Psoas muscle (tissue), 8 donors: ENCODE measurements at regions of chr11 and their contacts with region 1.

Region 1: DNA sequence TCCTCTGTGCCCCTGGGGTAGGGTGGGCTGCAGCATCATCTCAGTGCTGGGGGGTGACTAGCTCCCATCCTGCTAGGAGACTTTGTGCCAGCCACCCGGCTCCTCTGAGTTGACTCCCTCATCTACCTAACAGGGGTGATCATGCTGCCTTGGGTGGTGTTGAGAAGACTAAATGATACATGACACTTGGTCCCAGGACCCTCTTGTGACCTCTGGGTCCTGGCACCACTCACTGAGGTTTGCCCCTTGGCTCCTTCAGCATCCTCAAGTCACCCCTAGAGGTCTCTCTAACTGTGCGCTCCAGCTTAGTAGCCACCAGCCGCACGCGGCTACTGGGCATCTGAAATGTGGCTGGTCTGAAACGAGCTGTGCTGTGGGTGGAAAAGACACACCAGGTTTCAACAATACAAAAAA is 72.1 kb downstream of the LRRC32 start:
- DNase-seq: no peak
- ATAC-seq: peak; percentile 57 to 74 (median 71)
- H3K4me3 ChIP-seq: no peak overlapping the region
- H3K27ac ChIP-seq: no peak overlapping the region
- H3K4me1 ChIP-seq: no peaks in the 10 kb centered on the region
- H3K27me3 ChIP-seq: no peaks in the 10 kb centered on the region
- CTCF ChIP-seq: peak; percentile 37

Region 2: DNA sequence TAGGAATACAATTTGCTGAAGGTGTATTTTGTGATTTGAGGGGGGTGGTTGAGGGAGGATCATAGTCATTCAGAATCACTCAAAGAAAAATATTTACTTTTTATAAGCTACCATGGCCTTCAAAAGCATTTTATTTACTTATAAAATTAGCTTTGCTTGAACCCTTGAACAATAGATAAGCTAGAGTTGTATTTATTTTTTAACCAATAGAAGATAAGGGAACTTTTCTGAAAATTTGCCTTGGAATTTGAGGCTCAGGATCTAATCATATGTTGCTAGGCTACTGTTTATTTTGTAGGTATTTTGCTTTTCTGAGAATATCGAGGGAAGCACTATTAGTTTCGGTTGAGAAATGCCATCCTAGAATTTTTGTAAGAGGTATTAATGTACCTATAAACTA is 71.6 kb before region 1 on chr11:
- intact Hi-C with region 1: no loop called
- DNase-seq: no peak
- ATAC-seq: no peak
- H3K4me3 ChIP-seq: no peak overlapping the region
- H3K27ac ChIP-seq: no peak overlapping the region
- H3K4me1 ChIP-seq: no peaks in the 10 kb centered on the region
- H3K27me3 ChIP-seq: no peaks in the 10 kb centered on the region
- CTCF ChIP-seq: no peak

Region 3: GRCh38 chr11:76560219-76560618 is 38.2 kb before region 1 on chr11:
- intact Hi-C with region 1: no loop called
- DNase-seq: no peak
- ATAC-seq: peak in 1 of 4 donors; percentile 37
- H3K4me3 ChIP-seq: no peak overlapping the region
- H3K27ac ChIP-seq: no peak overlapping the region
- H3K4me1 ChIP-seq: no peaks in the 10 kb centered on the region
- H3K27me3 ChIP-seq: peaks cover 0 to 8% (median 0%) of the 10 kb centered on the region in 3 donors
- CTCF ChIP-seq: no peak

Region 4: GRCh38 chr11:76680518-76681425 is 82.3 kb after region 1 on chr11:
- intact Hi-C with region 1: loop called in 1 of 2 experiments (anchors 5 kb)
- DNase-seq: peak; percentile 61 to 75
- ATAC-seq: peak; percentile 46 to 79 (median 70)
- H3K4me3 ChIP-seq: no peak overlapping the region
- H3K27ac ChIP-seq: no peak overlapping the region
- H3K4me1 ChIP-seq: no peaks in the 10 kb centered on the region
- H3K27me3 ChIP-seq: no peaks in the 10 kb centered on the region
- CTCF ChIP-seq: peak; percentile 77